Activated CD4-positive, alpha-beta memory T cell treated with anti-CD3 and anti-CD28 coated beads for 36 hours (primary cell): ENCODE measurements at regions of chr22 and their contacts with region 1.

Region 1: DNA sequence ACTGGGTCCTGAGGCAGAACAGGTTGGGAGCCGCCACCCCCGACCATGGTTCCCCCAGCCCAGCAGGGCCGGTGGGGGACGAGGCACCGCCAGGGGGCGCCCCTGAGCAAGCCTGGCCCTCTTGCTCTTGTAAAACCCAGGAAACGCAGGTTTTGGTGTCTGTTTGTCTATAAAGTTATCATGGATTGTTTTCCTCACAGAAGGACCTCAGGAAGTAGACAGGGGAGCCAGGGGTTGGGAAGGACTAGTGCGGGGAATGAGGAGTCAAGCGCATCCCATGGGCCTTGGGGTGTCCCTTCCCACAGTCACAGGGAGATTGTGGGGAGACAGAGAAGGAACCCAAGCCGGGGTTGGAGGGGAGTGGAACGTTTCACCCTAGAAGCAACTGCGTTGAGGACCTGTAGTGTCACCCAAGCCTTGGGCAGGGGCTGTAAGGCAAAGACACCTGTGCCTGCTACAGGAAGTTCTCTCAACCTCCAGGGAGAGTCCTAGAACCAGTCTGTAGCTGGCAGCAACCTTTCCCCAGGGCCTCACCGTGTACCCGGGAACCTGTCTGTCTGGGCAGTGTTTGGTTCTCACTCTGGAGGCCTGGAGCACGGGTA is 26.4 kb downstream of the KCTD17 start:
- DNase-seq: peak; percentile 91
- H3K4me3 Mint-ChIP-seq: peak overlapping the region; percentile 49
- H3K27ac Mint-ChIP-seq: peak overlapping the region; percentile 91
- H3K4me1 Mint-ChIP-seq: peaks cover 52% of the 10 kb centered on the region
- H3K27me3 Mint-ChIP-seq: peaks cover 4% of the 10 kb centered on the region

Region 2: DNA sequence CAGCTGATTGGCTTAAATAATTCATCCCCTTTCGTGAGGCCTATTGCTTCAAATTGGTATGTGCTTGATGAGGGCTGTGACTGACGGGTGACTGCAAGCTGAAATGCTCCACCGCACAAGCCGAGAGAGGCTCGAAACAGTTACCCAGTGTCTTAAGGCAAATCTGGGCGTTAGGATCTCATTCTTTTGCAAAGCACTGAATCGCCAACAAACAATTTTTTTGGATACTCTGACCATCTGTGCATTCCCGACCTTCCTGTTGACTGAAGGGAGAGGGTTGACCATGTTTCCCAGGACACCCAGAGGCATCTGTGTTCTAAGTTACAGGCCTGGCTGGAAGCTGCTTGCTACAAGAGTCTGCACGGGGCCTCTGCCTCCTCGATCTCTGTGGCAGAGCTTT is 406.6 kb before region 1 on chr22:
- CTCF ChIA-PET with region 1: no interaction called
- POLR2A ChIA-PET with region 1: no interaction called
- intact Hi-C with region 1: no loop called
- DNase-seq: no peak
- H3K4me3 Mint-ChIP-seq: no peak overlapping the region
- H3K27ac Mint-ChIP-seq: no peak overlapping the region
- H3K4me1 Mint-ChIP-seq: no peaks in the 10 kb centered on the region
- H3K27me3 Mint-ChIP-seq: peaks cover 10% of the 10 kb centered on the region

Region 3: DNA sequence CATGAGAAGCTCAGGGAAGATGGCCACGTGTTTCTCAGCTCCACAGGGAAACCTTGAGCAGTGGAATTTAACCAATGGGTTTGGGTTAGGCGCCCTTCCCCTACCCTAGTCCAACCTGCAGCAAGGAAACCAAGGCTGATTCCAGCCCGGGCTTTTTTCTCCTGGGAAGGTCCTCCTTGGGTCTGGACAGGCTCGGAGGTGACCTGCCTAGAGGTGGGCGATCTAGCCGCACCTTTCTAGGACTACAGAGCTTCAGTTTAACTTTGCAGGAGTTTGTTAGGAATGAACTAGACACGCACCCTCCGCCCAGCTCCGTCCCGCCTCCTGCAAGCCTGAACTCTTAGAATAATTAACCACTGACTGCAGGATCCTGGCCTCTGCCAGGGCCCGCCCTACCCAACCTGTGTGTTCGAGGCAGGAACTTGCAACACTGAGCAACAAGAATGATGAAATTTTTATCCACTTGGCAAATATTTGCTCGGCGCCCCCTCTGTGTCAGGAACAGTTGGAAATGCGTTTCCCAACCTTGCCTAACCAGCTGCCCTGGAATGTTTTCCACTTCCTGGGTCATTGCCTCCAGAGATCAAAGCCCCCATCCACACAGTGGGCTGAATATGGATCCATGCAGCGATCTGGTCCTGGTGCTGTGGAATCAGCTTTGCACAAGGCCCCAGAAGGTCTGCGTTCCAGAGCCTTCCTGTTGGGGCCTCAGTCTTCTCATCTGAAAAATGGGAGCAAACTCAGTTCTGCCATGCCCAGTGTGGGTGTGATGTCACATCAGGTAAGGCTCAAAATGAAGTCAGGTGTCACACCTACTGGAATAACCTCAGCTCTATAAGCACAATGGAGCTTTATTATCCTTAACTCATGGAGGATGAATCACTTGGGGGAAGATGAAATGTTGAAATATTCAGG is 45.2 kb before region 1 on chr22:
- CTCF ChIA-PET with region 1: no interaction called
- POLR2A ChIA-PET with region 1: no interaction called
- intact Hi-C with region 1: no loop called
- DNase-seq: no peak
- H3K4me3 Mint-ChIP-seq: no peak overlapping the region
- H3K27ac Mint-ChIP-seq: no peak overlapping the region
- H3K4me1 Mint-ChIP-seq: no peaks in the 10 kb centered on the region
- H3K27me3 Mint-ChIP-seq: peaks cover 5% of the 10 kb centered on the region

Region 4: DNA sequence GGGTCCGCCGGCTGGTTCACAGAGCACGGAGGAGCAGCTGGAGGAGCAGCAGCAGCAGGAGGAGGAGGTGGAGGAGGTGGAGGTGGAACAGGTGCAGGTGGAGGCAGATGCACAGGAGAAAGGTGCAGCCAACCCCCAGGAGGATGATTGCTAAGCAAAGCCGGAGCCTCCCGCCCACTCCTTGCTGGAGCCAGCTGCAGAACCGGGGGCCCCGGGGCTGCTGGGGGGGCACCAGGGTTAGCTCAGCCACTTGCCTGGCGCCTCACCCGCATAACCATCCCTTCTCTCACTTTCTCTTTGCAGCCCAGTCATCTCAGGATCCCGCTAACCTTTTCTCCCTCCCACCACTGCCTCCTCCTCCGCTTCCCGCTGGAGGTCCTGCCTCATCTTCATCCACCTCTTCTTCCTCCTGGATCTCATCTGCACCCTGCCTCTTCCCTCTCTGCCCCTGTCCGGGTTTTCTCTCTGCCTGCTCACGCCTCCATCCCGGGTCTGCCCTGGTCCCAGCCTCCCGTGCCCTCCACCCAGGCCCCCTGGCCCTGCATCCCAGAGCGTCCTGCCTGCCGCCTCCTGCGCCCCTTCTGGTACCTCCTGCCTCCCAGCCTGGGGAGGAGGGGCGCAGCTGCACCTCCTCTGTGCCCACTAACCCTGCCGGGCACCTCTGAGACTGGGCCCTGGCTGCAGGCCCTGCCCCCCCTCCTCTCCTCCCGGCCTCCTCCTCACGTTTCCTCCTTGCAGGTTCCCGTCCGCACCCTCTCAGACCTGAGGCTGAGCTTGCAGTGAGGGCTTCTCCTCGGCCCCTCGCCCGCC is 17.0 kb before region 1 on chr22:
- CTCF ChIA-PET with region 1: interaction called, 3 read pairs
- POLR2A ChIA-PET with region 1: interaction called, 7 read pairs
- intact Hi-C with region 1: loop called (anchors 2 kb)
- DNase-seq: peak; percentile 91
- H3K4me3 Mint-ChIP-seq: peak overlapping the region; percentile 77
- H3K27ac Mint-ChIP-seq: peak overlapping the region; percentile 83
- H3K4me1 Mint-ChIP-seq: peaks cover 38% of the 10 kb centered on the region
- H3K27me3 Mint-ChIP-seq: no peaks in the 10 kb centered on the region

Region 5: DNA sequence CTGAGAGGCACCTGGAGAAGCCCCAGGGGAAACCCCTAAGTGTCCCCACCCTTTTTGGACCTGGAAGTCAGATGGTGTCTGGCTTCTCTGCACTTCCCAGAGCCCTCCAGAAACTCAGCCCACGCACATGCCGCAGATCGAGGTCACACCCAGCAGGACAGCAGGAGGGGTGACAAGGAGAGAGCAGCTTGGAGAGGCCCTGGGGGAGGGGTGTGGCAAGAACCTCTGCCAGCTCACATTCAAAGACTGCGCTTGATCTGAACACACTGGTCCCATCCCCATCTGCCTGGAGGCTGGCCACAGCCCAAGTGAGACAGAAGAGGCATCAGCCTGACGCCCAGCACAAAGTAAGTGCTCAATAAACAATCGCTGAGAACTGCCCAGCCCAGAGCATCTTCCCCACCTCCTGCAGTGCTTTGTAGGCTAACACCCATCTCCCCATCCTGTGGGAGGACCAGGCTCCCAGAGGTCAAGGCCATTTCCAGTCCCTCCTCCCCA is 10.2 kb after region 1 on chr22:
- CTCF ChIA-PET with region 1: interaction called, 7 read pairs
- POLR2A ChIA-PET with region 1: interaction called, 31 read pairs
- intact Hi-C with region 1: loop called (anchors 1 kb)
- DNase-seq: peak; percentile 85
- H3K4me3 Mint-ChIP-seq: peak overlapping the region; percentile 74
- H3K27ac Mint-ChIP-seq: peak overlapping the region; percentile 83
- H3K4me1 Mint-ChIP-seq: peaks cover 37% of the 10 kb centered on the region
- H3K27me3 Mint-ChIP-seq: peaks cover 2% of the 10 kb centered on the region

Region 6: DNA sequence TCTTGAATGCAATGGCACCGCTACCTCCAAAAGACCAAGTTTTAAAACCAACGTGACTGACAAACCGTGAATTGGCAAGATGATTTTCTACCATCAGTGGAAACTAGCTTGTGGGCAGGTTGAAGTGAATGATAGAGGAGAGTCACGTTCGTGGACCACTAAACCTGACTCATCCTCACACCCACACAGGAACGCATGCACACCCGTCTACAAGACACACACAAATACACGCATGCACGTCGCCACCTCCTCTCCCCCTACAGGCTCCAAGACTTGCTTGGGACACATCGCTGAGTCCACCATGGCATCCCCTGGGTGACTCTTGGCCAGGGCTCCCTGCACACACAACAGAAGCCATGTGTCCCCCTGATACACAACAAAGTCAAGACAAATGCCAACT is 17.1 kb after region 1 on chr22:
- CTCF ChIA-PET with region 1: interaction called, 12 read pairs
- POLR2A ChIA-PET with region 1: interaction called, 31 read pairs
- intact Hi-C with region 1: loop called (anchors 1 kb)
- DNase-seq: peak; percentile 85
- H3K4me3 Mint-ChIP-seq: no peak overlapping the region
- H3K27ac Mint-ChIP-seq: peak overlapping the region; percentile 76
- H3K4me1 Mint-ChIP-seq: peaks cover 35% of the 10 kb centered on the region
- H3K27me3 Mint-ChIP-seq: peaks cover 3% of the 10 kb centered on the region

Region 7: DNA sequence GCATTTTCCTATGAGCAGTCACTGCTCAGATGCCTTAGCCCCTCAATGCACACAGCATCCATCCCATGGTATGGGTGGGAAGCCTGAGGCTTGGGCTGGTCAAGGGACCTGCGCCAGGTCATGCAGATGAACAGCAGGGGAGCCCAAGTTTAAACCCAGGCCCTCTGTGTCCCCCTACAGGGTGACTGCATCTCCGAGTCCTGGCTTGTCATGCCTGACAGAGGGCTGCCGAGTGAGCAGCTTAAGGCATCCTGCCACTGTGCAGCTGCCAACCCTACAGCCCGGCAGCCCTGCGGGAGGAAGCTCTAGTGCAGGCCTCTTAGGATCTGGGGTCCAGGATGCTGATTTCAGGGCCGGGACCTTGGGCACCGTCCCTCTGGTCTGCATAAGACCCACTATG is 61.8 kb after region 1 on chr22:
- CTCF ChIA-PET with region 1: interaction called, 3 read pairs
- POLR2A ChIA-PET with region 1: interaction called, 7 read pairs
- intact Hi-C with region 1: loop called (anchors 1 kb)
- DNase-seq: peak; percentile 40
- H3K4me3 Mint-ChIP-seq: peak overlapping the region; percentile 25
- H3K27ac Mint-ChIP-seq: peak overlapping the region; percentile 98
- H3K4me1 Mint-ChIP-seq: peaks cover 78% of the 10 kb centered on the region
- H3K27me3 Mint-ChIP-seq: no peaks in the 10 kb centered on the region

Region 8: DNA sequence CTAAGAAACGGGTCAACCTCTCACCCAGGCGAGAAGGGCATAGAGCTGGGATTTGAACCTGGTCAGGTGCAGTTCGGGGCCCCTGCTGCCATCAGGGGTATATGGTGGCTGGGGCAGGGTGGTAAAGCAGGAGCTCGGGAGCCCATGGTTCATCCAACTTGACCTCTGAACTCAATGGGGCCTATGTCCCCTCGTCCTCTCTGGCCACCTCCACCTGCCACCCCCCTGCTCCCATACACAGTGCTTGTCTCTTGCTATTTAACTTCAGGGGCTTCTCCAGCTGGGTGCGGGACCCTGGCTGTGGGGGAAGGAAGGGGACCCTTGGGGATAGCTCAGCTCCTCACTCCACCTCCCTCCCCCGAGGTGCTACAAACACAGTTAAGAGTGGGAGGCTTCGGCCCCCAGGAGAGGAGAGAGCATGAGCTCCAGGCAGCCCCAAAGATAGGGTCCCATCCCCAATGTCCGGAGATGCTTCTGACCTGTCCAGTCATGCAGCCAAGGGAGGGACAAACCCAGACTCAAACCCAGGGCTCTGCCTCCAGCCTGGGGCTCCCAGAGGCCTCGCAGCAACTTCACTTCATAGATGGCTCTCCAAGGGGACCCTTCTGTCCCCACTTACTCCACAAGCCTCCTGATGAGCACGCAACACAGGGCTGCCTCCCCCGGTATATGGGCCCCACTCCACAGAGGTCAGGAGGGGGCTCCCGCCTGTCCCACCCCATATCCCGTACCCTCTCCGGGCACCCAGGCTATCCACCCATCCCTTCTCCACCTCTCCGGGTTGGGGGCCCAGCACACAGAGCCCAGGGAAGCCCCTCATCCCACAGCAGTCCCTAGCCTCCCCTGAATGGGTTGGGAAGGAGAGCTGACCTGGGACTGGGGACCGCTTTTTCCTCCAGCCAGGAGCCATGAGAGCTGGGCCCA is 71.0 kb after region 1 on chr22:
- CTCF ChIA-PET with region 1: interaction called, 10 read pairs
- POLR2A ChIA-PET with region 1: interaction called, 33 read pairs
- intact Hi-C with region 1: loop called (anchors 1 kb)
- DNase-seq: no peak
- H3K4me3 Mint-ChIP-seq: peak overlapping the region; percentile 95
- H3K27ac Mint-ChIP-seq: peak overlapping the region; percentile 95
- H3K4me1 Mint-ChIP-seq: peaks cover 56% of the 10 kb centered on the region
- H3K27me3 Mint-ChIP-seq: no peaks in the 10 kb centered on the region